Activated naive CD4-positive, alpha-beta T cell treated with anti-CD3 and anti-CD28 coated beads for 36 hours (primary cell): ENCODE measurements at regions of chr14 and their contacts with region 1.

Region 1: DNA sequence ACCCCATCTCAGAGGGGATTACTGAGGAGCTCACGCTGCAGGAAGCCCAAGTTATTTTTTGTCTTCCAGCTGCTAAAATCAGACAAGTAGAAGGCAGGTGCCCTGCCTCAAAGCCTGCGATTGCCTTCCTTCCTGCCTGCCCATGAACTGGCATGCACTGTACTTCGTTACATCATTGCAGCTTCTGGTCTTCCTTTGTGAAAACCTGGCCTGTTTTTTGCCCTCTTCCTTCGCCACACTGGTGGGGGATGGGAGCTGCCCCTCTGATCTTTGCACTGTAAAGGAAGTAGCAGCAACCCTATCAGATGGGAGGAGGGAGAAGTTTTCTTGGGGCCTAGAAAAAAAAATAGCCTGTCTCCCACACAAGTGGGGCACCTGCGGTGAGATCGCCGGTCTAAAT is 1098.7 kb downstream of the BCL11B start:
- DNase-seq: peak; percentile 78
- H3K4me3 Mint-ChIP-seq: peak overlapping the region; percentile 49
- H3K27ac Mint-ChIP-seq: peak overlapping the region; percentile 98
- H3K4me1 Mint-ChIP-seq: peaks cover 97% of the 10 kb centered on the region
- H3K27me3 Mint-ChIP-seq: no peaks in the 10 kb centered on the region

Region 2: DNA sequence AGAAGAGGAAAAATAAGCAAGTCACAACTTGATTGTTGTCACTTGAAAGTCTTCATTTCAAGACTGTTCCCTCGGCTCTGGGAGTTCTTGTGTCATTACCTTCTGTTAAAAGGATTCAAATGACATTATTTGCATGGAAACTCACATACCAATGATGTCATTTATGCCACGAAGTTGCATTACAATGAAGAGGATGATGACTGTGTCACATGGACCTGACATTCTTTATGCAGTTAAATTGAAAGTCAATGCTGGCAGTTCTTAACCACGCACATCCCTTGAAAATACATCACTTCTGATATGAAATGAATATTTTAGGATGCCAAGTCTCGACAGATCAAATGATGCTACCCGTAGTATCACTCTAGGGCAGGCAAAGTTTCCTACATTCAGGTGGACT is 306.6 kb before region 1 on chr14:
- CTCF ChIA-PET with region 1: no interaction called
- intact Hi-C with region 1: loop called (anchors 1 kb)
- DNase-seq: peak; percentile 25
- H3K4me3 Mint-ChIP-seq: no peak overlapping the region
- H3K27ac Mint-ChIP-seq: peak overlapping the region; percentile 61
- H3K4me1 Mint-ChIP-seq: peaks cover 15% of the 10 kb centered on the region
- H3K27me3 Mint-ChIP-seq: no peaks in the 10 kb centered on the region

Region 3: GRCh38 chr14:98077176-98077575 is 96.1 kb before region 1 on chr14:
- CTCF ChIA-PET with region 1: no interaction called
- intact Hi-C with region 1: no loop called
- DNase-seq: no peak
- H3K4me3 Mint-ChIP-seq: no peak overlapping the region
- H3K27ac Mint-ChIP-seq: peak overlapping the region; percentile 1
- H3K4me1 Mint-ChIP-seq: peaks cover 7% of the 10 kb centered on the region
- H3K27me3 Mint-ChIP-seq: no peaks in the 10 kb centered on the region

Region 4: DNA sequence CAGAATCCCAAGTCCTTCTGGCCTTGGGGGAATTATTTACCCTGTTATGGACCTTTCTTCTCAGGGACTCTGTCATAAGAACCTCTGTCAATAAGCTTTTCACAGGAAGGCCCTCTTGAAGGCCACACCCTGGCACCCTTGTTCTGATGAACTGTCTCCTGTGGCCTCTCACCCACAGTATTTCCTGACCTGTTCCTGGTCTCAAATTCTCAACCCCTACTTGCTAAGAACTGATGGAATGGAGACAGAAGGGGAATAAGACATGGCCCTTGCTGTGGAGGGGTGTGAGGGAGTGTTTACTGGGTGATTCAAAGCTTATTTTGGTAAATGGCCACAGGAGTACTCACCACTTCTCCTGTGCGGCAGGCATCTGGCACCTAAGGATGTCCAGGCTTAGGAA is 15.8 kb after region 1 on chr14:
- CTCF ChIA-PET with region 1: interaction called, 7 read pairs
- intact Hi-C with region 1: loop called (anchors 1 kb)
- DNase-seq: peak; percentile 62
- H3K4me3 Mint-ChIP-seq: peak overlapping the region; percentile 58
- H3K27ac Mint-ChIP-seq: peak overlapping the region; percentile 96
- H3K4me1 Mint-ChIP-seq: peaks cover 96% of the 10 kb centered on the region
- H3K27me3 Mint-ChIP-seq: no peaks in the 10 kb centered on the region

Region 5: DNA sequence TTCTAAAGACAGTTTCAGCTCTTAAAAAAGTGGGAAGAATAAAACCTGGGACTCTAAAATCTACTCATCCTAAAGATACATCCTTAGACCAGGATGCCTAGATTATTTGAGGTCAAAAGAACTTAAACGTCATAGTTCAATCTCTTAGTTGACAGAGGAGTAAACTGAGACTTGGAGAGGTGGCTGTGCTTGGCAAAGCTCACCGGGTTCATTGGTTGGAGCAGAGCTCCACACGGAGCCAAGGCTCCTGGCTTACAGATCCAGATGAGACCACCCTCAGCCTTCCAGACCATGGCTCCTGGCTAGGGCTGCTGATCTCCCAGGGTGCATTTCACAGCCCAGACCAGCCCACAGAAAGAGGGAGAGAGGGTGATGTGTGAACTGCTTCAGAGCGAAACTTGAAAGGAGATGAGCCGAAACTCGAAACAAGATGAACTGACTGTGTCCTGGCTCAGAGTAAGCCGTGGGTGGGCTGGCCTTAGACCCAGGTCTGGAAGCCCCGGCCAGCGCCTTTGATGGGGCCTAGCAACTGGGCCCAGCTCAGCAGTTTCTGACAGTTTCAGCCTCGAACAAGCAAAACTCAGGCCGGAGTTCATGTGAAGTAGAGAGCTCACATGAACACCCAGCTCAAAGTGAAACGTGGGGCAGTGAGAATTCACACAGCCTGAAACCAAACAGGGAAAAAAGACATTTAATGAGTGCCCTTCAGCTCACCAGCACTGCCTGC is 53.9 kb after region 1 on chr14:
- CTCF ChIA-PET with region 1: interaction called, 6 read pairs
- intact Hi-C with region 1: loop called (anchors 1 kb)
- DNase-seq: peak; percentile 67
- H3K4me3 Mint-ChIP-seq: peak overlapping the region; percentile 51
- H3K27ac Mint-ChIP-seq: peak overlapping the region; percentile 93
- H3K4me1 Mint-ChIP-seq: peaks cover 86% of the 10 kb centered on the region
- H3K27me3 Mint-ChIP-seq: no peaks in the 10 kb centered on the region

Region 6: DNA sequence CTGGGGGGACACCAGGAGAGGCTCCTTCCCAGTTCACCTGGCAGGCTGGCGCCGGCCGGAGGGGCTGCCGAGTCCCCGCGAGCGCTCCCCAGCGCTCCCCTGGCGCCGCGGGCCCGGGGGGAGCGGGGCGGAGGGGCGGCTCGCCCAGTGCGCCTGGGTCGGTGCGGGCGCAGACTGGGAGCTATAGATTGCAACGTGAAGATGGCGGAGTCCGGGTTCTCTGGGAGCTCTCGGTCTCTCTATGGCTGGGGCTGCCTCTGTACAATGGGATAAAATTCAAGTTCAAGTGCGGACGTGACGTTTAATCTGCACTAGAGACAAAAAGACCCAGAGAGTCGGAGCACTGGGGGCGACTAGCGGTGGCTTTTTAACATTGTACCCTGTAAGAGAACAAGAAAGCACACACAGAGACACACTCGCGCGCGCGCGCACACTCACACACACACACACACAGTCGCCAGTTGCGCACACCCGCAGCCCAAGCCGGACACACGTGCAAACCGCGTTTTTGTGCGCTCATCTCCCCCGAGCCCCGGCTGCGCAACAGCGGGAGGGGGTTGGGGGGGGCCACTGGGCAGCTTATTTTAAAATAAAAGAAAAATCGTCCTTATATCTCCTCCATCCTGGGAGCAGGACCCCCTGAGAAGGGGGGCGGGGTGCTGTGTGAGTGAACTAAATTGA is 1098.8 kb after region 1 on chr14 and contains the start of gene BCL11B:
- CTCF ChIA-PET with region 1: interaction called, 3 read pairs
- intact Hi-C with region 1: loop called (anchors 2 kb)
- DNase-seq: peak; percentile 95
- H3K4me3 Mint-ChIP-seq: peak within 1 kb of the TSS; percentile 96
- H3K27ac Mint-ChIP-seq: peak within 1 kb of the TSS; percentile 97
- H3K4me1 Mint-ChIP-seq: peaks cover 23% of the 10 kb centered on the region
- H3K27me3 Mint-ChIP-seq: no peaks in the 10 kb centered on the region
- total RNA-seq, gene BCL11B: 71.7 to 71.9 TPM